Heart right ventricle (tissue), 16 donors: ENCODE measurements at regions of chr2 and their contacts with region 1.

Region 1: GRCh38 chr2:106582148-106583143 is 95.3 kb downstream of the CD8B2 start:
- DNase-seq: peak; percentile 59 to 77
- ATAC-seq: peak; percentile 77 to 90 (median 82)
- H3K4me3 ChIP-seq: peak overlapping the region in 9 of 10 donors; percentile 10 to 47 (median 37)
- H3K27ac ChIP-seq: no peak overlapping the region
- H3K4me1 ChIP-seq: peaks cover 0 to 18% (median 7%) of the 10 kb centered on the region in 9 donors
- H3K27me3 ChIP-seq: peaks cover 0 to 45% (median 22%) of the 10 kb centered on the region in 7 donors
- CTCF ChIP-seq: peak; percentile 71 to 88 (median 84)

Region 2: DNA sequence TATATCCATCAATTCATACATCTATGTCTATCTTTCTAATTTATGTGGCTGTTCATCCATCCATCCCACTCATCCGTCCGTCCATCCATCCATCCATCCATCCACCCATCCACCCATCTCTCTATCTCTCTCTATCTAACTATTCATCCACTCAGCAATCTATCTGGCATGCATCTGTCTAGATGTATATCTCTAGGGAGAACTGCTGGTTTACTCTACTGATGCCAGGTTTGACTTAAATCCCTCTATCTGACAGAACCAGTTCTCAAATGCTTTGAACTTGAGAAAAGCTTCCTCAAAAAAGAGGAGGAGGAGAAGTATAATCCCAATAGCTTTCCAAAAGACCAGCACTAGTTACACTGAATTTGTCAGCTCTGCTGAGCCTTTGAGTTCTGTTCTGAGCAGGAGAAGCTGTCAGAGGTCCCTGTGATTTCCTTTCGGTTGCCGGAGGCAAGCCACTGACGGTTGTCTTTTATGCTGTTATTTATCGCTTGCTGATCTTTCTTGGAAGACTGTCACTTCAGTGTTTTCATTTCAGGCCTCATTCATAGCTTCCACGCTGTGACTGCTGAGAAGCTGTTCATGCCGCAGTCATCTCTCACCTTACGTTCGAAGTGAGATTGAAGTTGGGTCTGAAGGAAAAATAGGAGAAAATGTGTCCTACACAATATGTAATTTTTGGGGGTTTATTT is 259.0 kb before region 1 on chr2:
- intact Hi-C with region 1: no loop called
- DNase-seq: no peak
- ATAC-seq: no peak
- H3K4me3 ChIP-seq: no peak overlapping the region
- H3K27ac ChIP-seq: no peak overlapping the region
- H3K4me1 ChIP-seq: no peaks in the 10 kb centered on the region
- H3K27me3 ChIP-seq: peaks cover 0 to 4% (median 0%) of the 10 kb centered on the region in 7 donors
- CTCF ChIP-seq: no peak

Region 3: GRCh38 chr2:106542811-106543259 is 39.6 kb before region 1 on chr2:
- intact Hi-C with region 1: loop called in 1 of 10 experiments (anchors 5 kb)
- DNase-seq: peak; percentile 60 to 65
- ATAC-seq: peak; percentile 57 to 88 (median 74)
- H3K4me3 ChIP-seq: peak overlapping the region in 6 of 10 donors; percentile 4 to 46 (median 27)
- H3K27ac ChIP-seq: no peak overlapping the region
- H3K4me1 ChIP-seq: peaks cover 0 to 22% (median 3%) of the 10 kb centered on the region in 9 donors
- H3K27me3 ChIP-seq: peaks cover 0 to 37% (median 17%) of the 10 kb centered on the region in 7 donors
- CTCF ChIP-seq: peak; percentile 72 to 99 (median 94)